Activated CD4-positive, alpha-beta T cell treated with anti-CD3 and anti-CD28 coated beads for 36 hours (primary cell): ENCODE measurements at regions of chr13 and their contacts with region 1.

Region 1: DNA sequence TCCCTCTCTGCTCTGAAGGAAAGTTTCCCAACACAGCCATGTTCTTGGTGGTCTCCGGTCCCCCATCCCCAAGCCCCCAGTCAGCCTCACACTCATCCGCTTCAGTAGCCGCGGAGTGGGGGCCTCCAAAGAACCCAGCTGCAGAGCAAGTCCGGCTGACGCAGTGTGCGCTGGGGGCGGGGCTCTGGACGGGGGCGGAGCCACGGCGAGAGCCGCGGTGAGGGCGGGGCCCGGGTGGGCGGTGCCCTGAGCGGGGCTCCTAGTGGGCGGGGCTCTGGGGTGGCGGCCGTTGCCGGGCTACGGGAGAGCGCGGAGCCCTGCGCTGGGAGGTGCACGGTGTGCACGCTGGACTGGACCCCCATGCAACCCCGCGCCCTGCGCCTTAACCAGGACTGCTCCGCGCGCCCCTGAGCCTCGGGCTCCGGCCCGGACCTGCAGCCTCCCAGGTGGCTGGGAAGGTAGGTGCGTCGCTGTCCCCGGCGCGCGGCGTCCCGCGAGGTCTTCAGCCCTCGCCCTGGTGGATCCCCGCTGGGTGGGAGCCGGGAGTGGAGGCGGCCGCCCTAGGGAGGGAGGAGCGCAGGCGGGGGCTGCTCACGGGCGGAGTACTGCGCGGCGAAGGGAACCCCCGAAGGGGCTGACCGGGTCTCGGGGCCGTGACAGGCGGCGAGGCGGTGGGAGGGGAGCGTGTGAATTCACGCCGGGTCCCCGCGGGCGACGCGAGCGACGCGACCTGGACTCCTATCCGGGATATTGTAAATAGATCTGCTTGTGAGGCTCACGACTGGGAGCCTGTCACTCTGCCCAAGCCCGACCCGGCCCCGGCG is 9.1 kb downstream of the TNFRSF19 start:
- DNase-seq: peak; percentile 96
- ATAC-seq: peak; percentile 95
- H3K4me3 Mint-ChIP-seq: peak overlapping the region; percentile 71
- H3K27ac Mint-ChIP-seq: no peak overlapping the region
- H3K4me1 Mint-ChIP-seq: peaks cover 24% of the 10 kb centered on the region
- H3K27me3 Mint-ChIP-seq: peaks cover 33% of the 10 kb centered on the region

Region 2: DNA sequence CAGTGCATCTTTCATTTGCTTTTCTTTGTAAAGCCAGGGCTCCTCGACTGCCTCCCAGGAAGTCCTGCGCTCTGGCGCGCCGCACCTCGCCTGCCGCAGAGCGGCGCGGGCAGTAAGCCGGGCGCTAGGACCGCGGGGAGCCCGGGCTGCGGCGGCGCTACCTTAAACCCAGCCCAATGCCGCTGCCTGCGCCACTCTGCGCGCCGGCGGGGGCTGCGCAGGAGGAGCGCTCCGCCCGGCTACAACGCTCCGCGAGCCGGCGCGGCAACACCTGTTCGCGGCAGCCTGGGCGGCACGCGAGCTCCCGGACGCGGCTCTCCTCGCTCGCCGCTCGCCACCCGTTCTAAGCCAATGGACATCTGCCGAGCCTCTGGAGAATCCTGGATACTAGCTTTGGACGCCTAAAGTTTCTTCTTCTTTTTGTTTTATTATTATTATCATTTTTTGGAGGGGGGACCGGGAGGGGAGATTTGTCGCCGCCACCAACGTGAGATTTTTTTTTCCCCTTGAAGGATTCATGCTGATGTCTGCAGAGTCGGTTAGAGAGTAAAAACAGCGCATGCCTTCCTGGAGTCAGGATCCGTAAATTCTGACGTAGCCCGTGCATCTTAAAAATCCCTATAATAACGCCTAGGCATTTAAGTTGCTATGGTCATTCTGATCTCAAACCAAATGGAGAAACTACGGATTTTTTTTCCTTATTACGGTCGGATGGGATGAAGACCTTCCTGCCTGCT is 1908.2 kb before region 1 on chr13 and contains the start of gene FGF9:
- CTCF ChIA-PET with region 1: no interaction called
- POLR2A ChIA-PET with region 1: no interaction called
- intact Hi-C with region 1: loop called in 1 of 2 experiments (anchors 10 kb)
- DNase-seq: peak; percentile 88
- ATAC-seq: peak; percentile 78
- H3K4me3 Mint-ChIP-seq: peak within 1 kb of the TSS; percentile 76
- H3K27ac Mint-ChIP-seq: peak within 1 kb of the TSS; percentile 53
- H3K4me1 Mint-ChIP-seq: peaks cover 45% of the 10 kb centered on the region
- H3K27me3 Mint-ChIP-seq: peaks cover 43% of the 10 kb centered on the region
- total RNA-seq, gene FGF9: 0.19 TPM in 1 of 2 experiments, not detected in the other

Region 3: GRCh38 chr13:23547000-23547590 is 32.2 kb before region 1 on chr13:
- CTCF ChIA-PET with region 1: no interaction called
- POLR2A ChIA-PET with region 1: no interaction called
- intact Hi-C with region 1: no loop called
- DNase-seq: no peak
- ATAC-seq: no peak
- H3K4me3 Mint-ChIP-seq: no peak overlapping the region
- H3K27ac Mint-ChIP-seq: no peak overlapping the region
- H3K4me1 Mint-ChIP-seq: no peaks in the 10 kb centered on the region
- H3K27me3 Mint-ChIP-seq: peaks cover 19% of the 10 kb centered on the region

Region 4: DNA sequence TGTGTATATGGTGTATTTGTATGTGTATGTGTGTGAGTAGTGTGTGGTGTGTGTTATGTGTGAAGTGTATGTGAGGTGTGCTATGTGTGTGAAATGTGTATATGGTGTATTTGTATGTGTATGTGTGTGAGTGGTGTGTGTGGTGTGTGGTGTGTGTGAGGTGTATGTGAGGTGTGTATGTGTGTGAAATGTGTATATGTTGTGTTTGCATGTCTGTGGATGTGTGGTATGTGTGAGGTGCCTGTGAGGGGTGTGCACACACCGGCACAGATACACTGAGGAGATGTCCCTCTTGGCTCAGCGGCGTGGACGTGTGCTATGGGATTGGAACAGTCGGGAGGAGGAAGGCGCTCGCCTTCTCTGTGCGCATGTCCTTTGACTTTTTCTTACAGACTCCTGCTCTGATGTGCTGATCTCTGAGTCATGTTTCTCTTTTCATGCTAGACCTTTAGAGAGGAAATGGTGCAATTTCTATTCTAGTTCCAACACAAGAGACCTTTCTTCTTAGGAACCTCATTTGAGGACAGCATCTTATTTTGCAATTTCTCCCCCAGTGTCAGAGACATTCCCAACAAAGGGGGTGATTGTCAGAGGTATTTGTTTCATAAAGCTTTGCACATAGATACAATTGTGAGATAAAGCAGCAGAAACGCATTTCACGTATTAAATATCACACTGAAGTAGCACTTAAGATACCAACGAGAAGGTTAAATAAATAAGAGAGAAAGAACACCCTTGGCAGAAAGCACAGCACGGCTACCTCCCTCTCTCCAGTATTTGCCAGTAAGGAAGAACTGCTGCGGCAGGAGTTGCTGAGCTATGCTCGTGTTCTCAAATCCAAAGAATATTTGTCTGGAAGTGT is 20.4 kb before region 1 on chr13:
- CTCF ChIA-PET with region 1: no interaction called
- POLR2A ChIA-PET with region 1: no interaction called
- intact Hi-C with region 1: loop called in 1 of 2 experiments (anchors 1 kb)
- DNase-seq: peak; percentile 52
- ATAC-seq: peak; percentile 97
- H3K4me3 Mint-ChIP-seq: no peak overlapping the region
- H3K27ac Mint-ChIP-seq: no peak overlapping the region
- H3K4me1 Mint-ChIP-seq: peaks cover 6% of the 10 kb centered on the region
- H3K27me3 Mint-ChIP-seq: peaks cover 10% of the 10 kb centered on the region

Region 5: GRCh38 chr13:23794267-23795161 is 215.2 kb after region 1 on chr13:
- CTCF ChIA-PET with region 1: no interaction called
- POLR2A ChIA-PET with region 1: no interaction called
- intact Hi-C with region 1: loop called in 1 of 2 experiments (anchors 2 kb)
- DNase-seq: no peak
- ATAC-seq: peak; percentile 75
- H3K4me3 Mint-ChIP-seq: no peak overlapping the region
- H3K27ac Mint-ChIP-seq: no peak overlapping the region
- H3K4me1 Mint-ChIP-seq: peaks cover 26% of the 10 kb centered on the region
- H3K27me3 Mint-ChIP-seq: no peaks in the 10 kb centered on the region

Region 6: GRCh38 chr13:23888658-23889614 is 309.7 kb after region 1 on chr13 and contains the start of gene MIPEP:
- CTCF ChIA-PET with region 1: interaction called, 3 read pairs
- POLR2A ChIA-PET with region 1: no interaction called
- intact Hi-C with region 1: loop called (anchors 1 kb)
- DNase-seq: peak; percentile 94
- ATAC-seq: peak; percentile 90
- H3K4me3 Mint-ChIP-seq: peak within 1 kb of the TSS; percentile 79
- H3K27ac Mint-ChIP-seq: peak within 1 kb of the TSS; percentile 75
- H3K4me1 Mint-ChIP-seq: peaks cover 23% of the 10 kb centered on the region
- H3K27me3 Mint-ChIP-seq: no peaks in the 10 kb centered on the region
- total RNA-seq, gene MIPEP: 13.2 to 15.5 TPM

Region 7: GRCh38 chr13:23980160-23980551 is 400.9 kb after region 1 on chr13:
- CTCF ChIA-PET with region 1: no interaction called
- POLR2A ChIA-PET with region 1: no interaction called
- intact Hi-C with region 1: loop called in 1 of 2 experiments (anchors 5 kb)
- DNase-seq: peak; percentile 91
- ATAC-seq: peak; percentile 87
- H3K4me3 Mint-ChIP-seq: peak overlapping the region; percentile 65
- H3K27ac Mint-ChIP-seq: no peak overlapping the region
- H3K4me1 Mint-ChIP-seq: peaks cover 10% of the 10 kb centered on the region
- H3K27me3 Mint-ChIP-seq: peaks cover 16% of the 10 kb centered on the region

Region 8: GRCh38 chr13:24264976-24265375 is 685.7 kb after region 1 on chr13:
- CTCF ChIA-PET with region 1: no interaction called
- POLR2A ChIA-PET with region 1: no interaction called
- intact Hi-C with region 1: loop called in 1 of 2 experiments (anchors 10 kb)
- DNase-seq: peak; percentile 92
- ATAC-seq: peak; percentile 92
- H3K4me3 Mint-ChIP-seq: peak overlapping the region; percentile 66
- H3K27ac Mint-ChIP-seq: peak overlapping the region; percentile 95
- H3K4me1 Mint-ChIP-seq: peaks cover 92% of the 10 kb centered on the region
- H3K27me3 Mint-ChIP-seq: no peaks in the 10 kb centered on the region